Motor neuron (in vitro differentiated cells): ENCODE measurements at regions of chr6 and their contacts with region 1.

Region 1: DNA sequence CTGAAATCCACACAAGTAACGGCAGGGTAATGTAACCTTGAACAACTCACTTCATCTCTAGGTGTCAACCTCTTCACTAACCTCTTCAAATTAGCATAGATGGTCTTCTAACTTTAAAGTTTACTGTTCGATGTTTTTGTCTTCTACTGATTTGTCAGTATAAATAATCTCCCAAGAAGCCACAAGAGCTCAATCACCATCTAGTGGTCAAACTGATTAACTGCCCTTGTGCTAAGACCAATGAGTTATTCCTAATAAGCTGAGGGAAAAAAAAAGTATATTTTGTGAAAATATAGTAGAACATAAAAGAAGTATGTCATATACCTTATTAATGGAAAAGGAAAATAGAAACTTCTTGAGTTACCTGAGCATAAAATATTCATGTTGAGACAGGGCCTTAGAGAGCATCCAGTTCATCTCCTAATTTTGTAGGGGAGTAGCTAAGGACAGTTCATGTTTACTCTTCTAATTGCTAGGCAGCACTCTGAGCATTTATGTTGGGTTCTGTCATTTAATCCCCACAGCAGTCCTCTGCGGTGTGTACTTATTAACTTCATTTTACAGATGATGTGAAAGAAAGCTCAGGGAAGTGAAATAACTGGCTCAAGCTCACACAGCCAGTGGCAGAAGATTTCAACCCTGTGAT is 317.1 kb downstream of the ESR1 start:
- ATAC-seq: peak in 4 of 8 experiments; percentile 27 to 68 (median 53)
- H3K4me3 ChIP-seq: no peak overlapping the region
- H3K27ac ChIP-seq: no peak overlapping the region
- H3K4me1 ChIP-seq: no peaks in the 10 kb centered on the region

Region 2: DNA sequence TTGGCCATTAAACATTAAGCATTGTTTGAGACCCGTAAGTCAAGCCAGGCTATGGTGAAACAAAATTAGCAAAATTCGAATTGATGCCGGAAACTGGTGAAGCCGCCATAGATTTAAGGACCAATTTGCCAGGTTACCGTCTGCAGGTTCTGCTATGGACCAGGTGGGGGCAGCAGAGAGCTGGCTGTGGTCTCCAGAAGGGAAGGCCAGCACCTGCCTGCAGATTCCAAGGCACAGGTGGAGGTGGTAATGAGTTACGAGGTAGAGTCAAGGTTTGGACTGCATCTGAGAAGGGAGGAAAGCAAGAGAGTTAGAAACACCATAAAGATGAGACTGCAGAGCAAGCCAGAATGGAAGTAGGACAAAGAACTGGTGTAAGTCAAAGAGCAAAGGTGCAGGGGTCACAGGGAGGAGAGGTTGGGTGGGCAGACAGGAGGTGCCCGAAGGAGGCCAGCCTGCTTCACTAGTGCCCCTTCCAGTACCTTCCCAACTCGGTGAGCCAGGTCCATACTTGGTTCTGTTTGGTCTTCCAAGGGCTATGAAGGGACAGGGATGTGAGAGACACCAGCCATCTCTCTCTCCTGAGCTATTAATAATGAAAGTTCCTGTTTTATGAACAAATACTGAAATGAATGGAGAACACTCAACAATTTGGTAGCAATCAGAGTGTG is 448.7 kb before region 1 on chr6:
- in situ Hi-C with region 1: loop called in 1 of 9 experiments (anchors 25 kb)
- ATAC-seq: peak in 3 of 8 experiments; percentile 31 to 66 (median 50)
- H3K4me3 ChIP-seq: no peak overlapping the region
- H3K27ac ChIP-seq: no peak overlapping the region
- H3K4me1 ChIP-seq: no peaks in the 10 kb centered on the region

Region 3: GRCh38 chr6:151765444-151765886 is 359.1 kb before region 1 on chr6:
- in situ Hi-C with region 1: loop called in 2 of 9 experiments (anchors 25 kb)
- ATAC-seq: peak in 7 of 8 experiments; percentile 3 to 58 (median 33)
- H3K4me3 ChIP-seq: no peak overlapping the region
- H3K27ac ChIP-seq: no peak overlapping the region
- H3K4me1 ChIP-seq: no peaks in the 10 kb centered on the region